ENCODE measurements at regions of chr2 and their contacts with region 1.

Region 1: DNA sequence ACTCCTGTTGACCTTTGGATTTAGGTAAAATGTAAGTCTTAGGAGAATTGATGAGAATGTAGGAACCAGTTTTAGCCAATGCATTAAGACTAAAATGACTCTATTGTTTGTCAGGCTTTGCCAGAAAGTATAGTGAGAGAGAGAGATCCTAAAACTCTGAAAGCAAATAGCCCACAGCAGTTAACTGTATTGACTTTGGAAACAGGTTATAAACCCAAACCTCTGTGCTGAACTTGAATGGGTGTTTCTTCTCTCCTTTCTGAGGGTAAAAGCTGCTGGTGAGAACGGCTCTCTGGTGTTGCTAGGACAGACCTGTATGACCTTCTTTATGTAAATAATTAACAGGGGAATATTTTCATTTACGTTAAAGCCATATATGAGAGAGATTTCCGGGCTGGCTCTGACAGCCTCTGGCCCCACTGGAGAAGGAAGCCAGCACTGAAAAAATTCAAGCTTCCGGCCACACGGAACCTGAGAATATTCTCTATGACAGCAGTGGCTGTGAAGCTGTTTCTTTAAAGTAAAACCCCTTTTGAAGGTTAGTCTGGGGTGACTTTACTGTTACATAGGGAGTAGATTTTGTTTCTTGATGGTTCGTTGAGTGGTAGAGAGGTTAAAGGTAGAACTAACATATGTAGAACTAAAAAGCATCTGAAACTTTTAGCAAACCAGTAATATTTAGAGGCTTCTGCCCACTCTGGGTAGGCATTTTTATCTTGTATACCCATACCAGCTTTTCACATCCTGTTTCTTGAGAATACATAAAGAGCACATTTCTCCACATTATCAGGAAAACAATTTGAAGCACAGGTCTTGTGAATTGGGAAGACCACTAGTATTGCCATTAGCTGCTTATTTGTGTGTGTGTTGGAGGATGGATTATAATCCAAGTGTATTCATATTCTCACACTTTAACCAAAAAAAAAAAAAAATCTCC is 123.8 kb downstream of the SPTBN1 start:
- DNase-seq: peak; percentile 65
- ATAC-seq: peak; percentile 44
- H3K4me3 ChIP-seq: peak overlapping the region in 1 of 5 experiments; percentile 34
- H3K4me3 Mint-ChIP-seq: peak overlapping the region; percentile 77
- H3K27ac ChIP-seq: peak overlapping the region; percentile 77 to 85
- H3K27ac Mint-ChIP-seq: peak overlapping the region; percentile 93
- H3K4me1 ChIP-seq: peaks cover 89 to 91% of the 10 kb centered on the region in 2 donors
- H3K4me1 Mint-ChIP-seq: peaks cover 93% of the 10 kb centered on the region
- H3K27me3 ChIP-seq: no peaks in the 10 kb centered on the region
- H3K27me3 Mint-ChIP-seq: no peaks in the 10 kb centered on the region
- CTCF ChIP-seq: no peak

Region 2: DNA sequence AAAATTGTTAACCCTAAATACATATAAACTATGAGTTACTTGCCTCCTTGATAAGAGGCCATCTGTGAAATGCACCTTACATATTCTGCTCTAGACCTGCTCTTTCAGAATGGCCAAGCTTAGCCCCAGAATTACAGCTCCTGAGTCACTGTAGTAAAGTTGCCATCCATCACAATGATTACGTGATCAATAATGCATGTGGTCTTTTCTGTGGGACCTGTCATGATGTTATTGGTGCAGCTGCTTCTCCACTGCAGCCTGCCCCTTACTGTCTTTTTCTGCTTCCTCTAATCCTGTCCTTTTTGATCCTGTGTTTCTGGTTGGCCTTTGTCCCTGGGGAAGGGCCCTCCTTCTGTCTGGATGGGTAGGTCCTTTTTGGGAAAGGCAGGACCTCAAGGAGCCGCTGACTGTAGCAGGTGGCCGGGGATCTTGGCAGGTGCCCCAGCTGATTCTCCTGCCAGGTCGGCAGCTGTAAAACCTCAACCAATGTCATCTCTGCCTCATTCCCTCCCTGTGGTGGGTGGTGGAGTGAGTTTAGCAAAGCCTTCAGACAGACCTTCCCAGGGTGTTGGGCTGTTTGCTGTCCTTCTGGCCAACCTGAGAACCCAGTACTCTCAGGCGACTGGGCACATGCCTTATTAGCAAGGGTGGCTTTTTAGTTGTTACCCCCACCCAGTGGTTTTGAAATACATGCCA is 17.3 kb after region 1 on chr2:
- CTCF ChIA-PET with region 1: interaction called, 11 read pairs
- POLR2A ChIA-PET with region 1: interaction called, 5 read pairs
- intact Hi-C with region 1: loop called (anchors 2 kb)
- DNase-seq: no peak
- ATAC-seq: peak; percentile 18
- H3K4me3 ChIP-seq: peak overlapping the region in 1 of 5 experiments; percentile 38
- H3K4me3 Mint-ChIP-seq: peak overlapping the region; percentile 67
- H3K27ac ChIP-seq: peak overlapping the region in 1 of 2 donors; percentile 71
- H3K27ac Mint-ChIP-seq: peak overlapping the region; percentile 80
- H3K4me1 ChIP-seq: peaks cover 74 to 81% of the 10 kb centered on the region in 2 donors
- H3K4me1 Mint-ChIP-seq: peaks cover 93% of the 10 kb centered on the region
- H3K27me3 ChIP-seq: no peaks in the 10 kb centered on the region
- H3K27me3 Mint-ChIP-seq: no peaks in the 10 kb centered on the region
- CTCF ChIP-seq: no peak

Region 3: DNA sequence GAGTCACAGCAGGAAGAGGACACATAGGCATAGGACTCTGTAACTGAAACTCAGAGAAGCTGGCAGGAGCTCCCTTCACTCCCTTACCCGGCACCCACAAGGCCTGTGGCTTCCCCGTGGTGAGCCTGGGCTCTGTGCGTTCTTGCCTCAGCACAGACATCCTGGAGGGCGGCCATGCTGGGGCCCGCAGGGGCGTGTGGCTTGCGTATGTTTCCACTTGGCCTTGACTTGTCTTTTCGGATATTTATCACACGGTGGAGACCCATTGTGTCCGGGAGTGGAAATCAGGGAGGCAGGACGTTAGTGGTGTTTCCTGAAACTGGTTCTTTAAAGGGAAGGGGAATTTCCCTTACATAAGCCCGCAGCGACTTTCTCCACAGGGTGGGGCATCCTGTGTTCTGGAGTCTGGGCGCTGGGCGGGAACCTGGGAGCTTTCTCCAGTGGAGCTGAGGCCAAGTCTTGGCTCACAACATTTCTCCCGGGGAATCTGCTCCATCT is 93.6 kb after region 1 on chr2:
- CTCF ChIA-PET with region 1: no interaction called
- POLR2A ChIA-PET with region 1: interaction called, 13 read pairs
- intact Hi-C with region 1: no loop called
- DNase-seq: peak; percentile 44
- ATAC-seq: peak; percentile 62
- H3K4me3 ChIP-seq: peak overlapping the region in 2 of 5 experiments; percentile 8 to 39
- H3K4me3 Mint-ChIP-seq: peak overlapping the region; percentile 79
- H3K27ac ChIP-seq: no peak overlapping the region
- H3K27ac Mint-ChIP-seq: peak overlapping the region; percentile 75
- H3K4me1 ChIP-seq: peaks cover 20 to 23% of the 10 kb centered on the region in 2 donors
- H3K4me1 Mint-ChIP-seq: peaks cover 35% of the 10 kb centered on the region
- H3K27me3 ChIP-seq: no peaks in the 10 kb centered on the region
- H3K27me3 Mint-ChIP-seq: no peaks in the 10 kb centered on the region
- CTCF ChIP-seq: no peak

Measured in B cell (primary cell).